Naive thymus-derived CD8-positive, alpha-beta T cell (primary cell): ENCODE measurements at regions of chr14 and their contacts with region 1.

Region 1: DNA sequence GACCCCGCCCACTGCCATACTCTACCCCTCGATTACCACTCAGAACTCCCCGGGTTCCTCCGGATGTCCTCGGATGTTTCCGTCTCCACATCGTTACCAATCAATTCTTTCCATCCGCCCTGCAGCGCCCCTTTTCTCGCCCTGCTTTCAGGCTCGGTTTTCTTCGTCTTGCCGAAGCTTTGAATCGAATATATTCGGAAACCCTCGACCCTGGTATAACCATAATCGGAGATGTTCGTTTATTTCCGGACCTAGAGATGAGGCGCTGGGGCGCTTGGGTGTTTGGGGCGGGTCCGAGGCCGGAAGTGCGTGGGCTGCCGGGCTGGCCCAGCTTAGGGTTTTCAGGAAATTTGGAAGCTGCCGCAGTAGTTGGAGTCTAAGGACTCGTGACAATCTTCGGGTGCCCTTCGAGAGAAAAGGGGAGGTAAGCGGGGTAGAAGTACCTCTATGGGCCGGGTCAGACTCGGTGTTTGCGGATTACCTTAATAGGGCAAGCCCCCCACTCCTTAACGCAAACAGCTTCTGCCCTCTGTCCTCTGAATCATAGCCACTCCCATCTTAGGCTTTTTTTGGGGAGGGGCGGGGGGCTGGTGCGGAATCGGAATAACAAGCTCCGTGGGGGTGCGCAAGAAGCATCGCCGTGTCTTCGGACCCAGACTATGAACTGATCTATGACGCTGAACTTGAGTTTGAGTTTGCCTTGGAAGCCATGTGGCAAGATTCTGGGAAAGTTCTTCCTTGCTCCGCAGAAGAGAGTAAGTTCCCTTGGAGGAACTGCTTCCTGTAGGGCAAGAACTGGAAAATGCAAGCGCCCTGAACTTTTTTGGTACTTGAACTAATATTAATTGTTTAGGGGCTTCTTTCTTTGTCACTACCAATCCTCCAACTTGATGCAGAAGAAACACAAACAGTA is at the start of gene C14orf119:
- DNase-seq: peak in 9 of 10 donors; percentile 81 to 100 (median 100)
- ATAC-seq: peak; percentile 88
- H3K4me3 Mint-ChIP-seq: no peak within 1 kb of the TSS
- H3K27ac Mint-ChIP-seq: no peak within 1 kb of the TSS
- H3K4me1 Mint-ChIP-seq: peaks cover 24 to 60% (median 34%) of the 10 kb centered on the region in 4 donors
- H3K27me3 Mint-ChIP-seq: no peaks in the 10 kb centered on the region
- polyA plus RNA-seq, gene C14orf119: 62.7 to 122 (median 78.5) TPM

Region 2: GRCh38 chr14:22852940-22853767 is 242.3 kb before region 1 on chr14:
- POLR2A ChIA-PET with region 1: no interaction called
- DNase-seq: peak; percentile 80 to 97 (median 88)
- ATAC-seq: peak; percentile 93 to 94
- H3K4me3 Mint-ChIP-seq: peak overlapping the region; percentile 76 to 91 (median 85)
- H3K27ac Mint-ChIP-seq: peak overlapping the region in 9 of 10 donors; percentile 48 to 86 (median 77)
- H3K4me1 Mint-ChIP-seq: peaks cover 8 to 26% (median 14%) of the 10 kb centered on the region in 4 donors
- H3K27me3 Mint-ChIP-seq: peaks cover 7 to 23% (median 10%) of the 10 kb centered on the region in 5 donors

Region 3: GRCh38 chr14:22898372-22899090 is 196.9 kb before region 1 on chr14:
- POLR2A ChIA-PET with region 1: no interaction called
- DNase-seq: no peak
- ATAC-seq: no peak
- H3K4me3 Mint-ChIP-seq: no peak overlapping the region
- H3K27ac Mint-ChIP-seq: peak overlapping the region in 7 of 10 donors; percentile 1 to 82 (median 28)
- H3K4me1 Mint-ChIP-seq: peaks cover 6 to 11% (median 6%) of the 10 kb centered on the region in 4 donors
- H3K27me3 Mint-ChIP-seq: no peaks in the 10 kb centered on the region

Region 4: DNA sequence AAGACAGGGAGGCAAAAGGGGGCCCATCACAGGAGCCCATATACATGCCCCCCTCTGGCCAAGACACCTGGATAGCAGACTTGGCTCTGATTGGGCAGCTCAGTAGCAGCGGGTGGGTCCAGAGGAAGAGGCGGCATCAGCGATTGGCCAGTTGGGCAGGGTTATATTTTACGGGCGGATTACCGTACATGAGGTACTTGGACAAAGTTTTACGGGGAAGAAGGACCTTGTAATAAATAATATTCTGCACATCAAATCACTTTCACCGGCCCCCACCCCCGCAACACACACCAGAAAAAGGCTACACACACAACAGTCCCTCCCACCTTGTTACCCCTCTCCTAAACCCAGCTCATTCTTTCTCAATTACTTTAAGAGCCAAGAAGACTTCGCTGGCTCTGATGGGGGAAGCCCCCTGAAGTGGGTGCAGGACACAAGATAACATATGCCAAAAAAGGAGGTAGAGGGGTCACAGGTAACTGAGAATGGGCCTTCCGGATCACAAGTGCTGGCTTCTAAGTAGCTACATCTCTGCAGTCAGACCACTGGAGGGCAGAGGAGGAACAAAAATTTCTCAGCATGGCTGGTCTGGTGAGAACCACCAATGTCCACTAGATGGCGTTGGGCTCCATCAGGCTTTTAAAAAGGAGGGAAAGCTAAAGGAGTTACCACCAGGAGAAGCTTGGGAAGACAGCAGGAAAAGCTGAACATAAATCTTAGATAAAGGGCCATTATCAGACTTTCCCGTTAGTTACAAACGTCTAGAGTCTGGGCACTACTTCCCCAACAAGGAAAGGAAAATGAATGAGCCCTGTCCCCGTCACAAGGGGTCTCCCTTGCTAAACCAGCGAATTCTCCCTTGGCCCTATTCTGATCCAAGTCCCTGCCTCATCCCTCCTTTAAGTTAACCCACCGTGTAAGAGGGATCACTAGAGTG is 26.7 kb before region 1 on chr14:
- POLR2A ChIA-PET with region 1: interaction called, 13 read pairs
- DNase-seq: peak; percentile 49 to 82 (median 72)
- ATAC-seq: peak; percentile 80 to 83
- H3K4me3 Mint-ChIP-seq: peak overlapping the region; percentile 4 to 83 (median 53)
- H3K27ac Mint-ChIP-seq: peak overlapping the region in 9 of 10 donors; percentile 40 to 94 (median 82)
- H3K4me1 Mint-ChIP-seq: peaks cover 21 to 48% (median 45%) of the 10 kb centered on the region in 4 donors
- H3K27me3 Mint-ChIP-seq: no peaks in the 10 kb centered on the region

Region 5: GRCh38 chr14:23076785-23077408 is 18.6 kb before region 1 on chr14:
- POLR2A ChIA-PET with region 1: interaction called, 15 read pairs
- DNase-seq: peak in 5 of 10 donors; percentile 32 to 57 (median 48)
- ATAC-seq: peak; percentile 70 to 79
- H3K4me3 Mint-ChIP-seq: no peak overlapping the region
- H3K27ac Mint-ChIP-seq: peak overlapping the region in 3 of 10 donors; percentile 43 to 56 (median 47)
- H3K4me1 Mint-ChIP-seq: peaks cover 0 to 19% (median 8%) of the 10 kb centered on the region in 4 donors
- H3K27me3 Mint-ChIP-seq: no peaks in the 10 kb centered on the region